ENCODE measurements at regions of chr14 and their contacts with region 1.

Region 1: DNA sequence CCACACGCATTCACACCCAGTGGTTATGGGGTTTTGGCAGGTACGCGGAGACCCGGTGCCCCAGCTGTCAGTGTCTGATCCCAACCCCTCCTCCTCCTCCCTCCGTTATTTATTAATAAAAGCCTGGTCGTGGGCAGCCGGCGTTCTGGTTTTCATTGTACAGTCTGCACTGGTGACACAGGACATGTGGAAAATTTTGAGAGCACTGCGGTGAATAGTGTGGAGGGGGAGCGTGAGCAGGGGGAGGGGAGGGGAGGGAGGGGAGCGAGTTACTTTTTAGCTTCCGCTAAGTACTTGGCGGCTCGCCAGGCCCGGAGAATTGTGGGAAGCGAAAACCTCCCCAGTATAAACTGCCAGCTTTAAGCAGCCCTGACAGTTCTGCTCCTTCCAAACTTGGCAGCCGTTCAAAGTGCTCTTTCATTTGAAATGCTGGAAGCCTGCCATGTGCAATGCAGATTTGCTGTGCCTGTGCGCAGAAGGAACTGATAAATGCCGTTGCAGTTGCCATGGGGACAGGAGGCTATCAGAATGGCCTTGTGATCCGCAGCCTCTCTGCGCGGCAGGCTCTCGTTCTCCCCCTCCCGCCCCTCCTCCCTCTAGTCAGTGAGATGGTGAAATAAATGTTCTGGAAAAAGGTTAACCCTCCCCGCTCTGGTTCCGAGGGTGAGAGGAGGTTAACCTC is 11.7 kb upstream of the IRF2BPL start:
- DNase-seq: peak; percentile 99

Region 2: DNA sequence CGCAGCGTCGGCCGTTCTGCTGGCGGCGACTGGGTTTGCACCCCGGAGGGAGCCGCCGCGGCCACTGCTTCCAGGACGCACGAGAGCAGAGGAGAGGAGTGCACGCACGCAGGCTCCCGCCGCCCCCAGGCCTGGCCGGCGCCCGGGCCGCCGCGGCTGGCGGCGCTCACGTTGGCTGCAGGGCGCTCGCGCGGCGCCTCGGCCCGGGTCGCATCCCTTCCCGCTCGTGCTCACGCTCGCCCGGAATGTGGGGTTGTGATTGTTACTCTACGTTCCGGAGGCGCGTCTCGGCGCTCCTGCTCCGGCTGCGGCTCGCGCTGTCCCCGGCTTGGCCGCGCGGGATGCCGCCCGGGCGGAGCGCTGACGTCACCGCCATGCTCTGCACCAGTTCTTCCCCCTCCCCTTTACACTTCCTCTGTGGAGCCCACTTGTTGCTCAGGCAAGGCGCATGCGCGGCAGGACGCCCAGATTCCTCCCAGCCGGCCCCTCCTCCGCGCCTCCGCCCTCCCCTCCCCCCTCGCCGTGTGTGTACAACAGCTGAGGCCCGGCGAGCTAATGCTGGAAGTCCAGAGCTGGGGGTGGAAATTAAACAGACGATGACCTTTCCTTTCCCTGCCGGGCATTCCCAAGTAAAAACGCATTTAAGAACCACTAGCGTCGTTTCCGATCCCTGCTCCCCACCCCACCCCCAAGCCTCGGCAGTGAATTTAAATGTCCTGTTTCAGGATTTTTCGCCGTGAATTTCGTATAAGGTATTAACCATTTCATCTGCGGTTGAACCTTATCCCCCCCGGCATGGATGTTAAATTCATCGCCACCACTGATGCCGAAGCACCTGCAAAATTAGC is 11.6 kb before region 1 on chr14 and contains the start of gene IRF2BPL:
- intact Hi-C with region 1: loop called (anchors 1 kb)
- DNase-seq: peak; percentile 99
- total RNA-seq, gene IRF2BPL: 46.0 TPM

Region 3: DNA sequence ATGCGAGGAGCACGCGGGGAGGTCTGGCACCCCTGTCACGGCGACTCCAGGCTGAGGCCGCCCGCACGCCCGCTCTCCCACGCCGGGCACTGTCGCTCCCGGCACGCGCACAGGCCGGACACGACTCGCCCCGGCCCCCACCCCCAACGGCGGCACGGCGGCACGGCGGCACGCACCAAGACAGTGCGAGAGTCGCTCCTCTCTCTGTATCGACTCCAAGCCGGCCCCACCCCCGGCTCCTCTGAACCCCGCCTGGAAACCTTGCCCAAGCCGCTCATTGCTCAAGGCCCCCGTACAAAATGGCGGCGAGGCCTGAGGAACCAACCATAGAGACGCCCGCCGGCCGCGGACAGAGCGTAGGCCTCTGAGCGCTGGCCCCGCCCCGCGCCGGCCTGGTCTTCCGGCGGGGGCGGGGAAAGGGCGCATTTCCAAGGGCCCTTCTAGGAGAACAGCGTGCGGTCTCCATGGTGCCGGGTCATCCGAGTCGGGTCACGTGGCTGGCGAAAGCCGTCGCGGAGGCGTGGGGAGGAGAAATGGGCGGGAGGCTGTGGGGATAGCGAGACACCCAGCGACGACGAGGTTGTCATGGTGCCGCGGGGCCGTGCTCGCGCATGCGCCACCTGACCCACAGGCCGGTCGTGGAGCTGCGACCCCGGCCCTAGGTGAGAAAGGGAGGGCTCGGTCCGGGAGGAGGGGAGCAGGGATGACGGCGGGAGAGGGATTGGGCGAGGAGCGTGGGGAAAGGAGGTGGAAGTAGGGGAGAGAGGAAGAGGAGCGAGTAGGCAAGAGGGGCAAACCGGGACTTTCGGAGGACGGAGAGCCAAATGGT is 57.7 kb after region 1 on chr14 and contains the start of gene CIPC:
- intact Hi-C with region 1: no loop called
- DNase-seq: peak; percentile 100
- total RNA-seq, gene CIPC: 45.9 TPM

Region 4: GRCh38 chr14:77181603-77182437 is 141.6 kb after region 1 on chr14 and contains the start of gene TMEM63C:
- intact Hi-C with region 1: no loop called
- DNase-seq: peak; percentile 54
- total RNA-seq, gene TMEM63C: 0.46 TPM

Measured in cardiac septum (tissue), 1 donor.